Calu3 (cell line): ENCODE measurements at regions of chr18 and their contacts with region 1.

Region 1: GRCh38 chr18:44341759-44342158 is 338.9 kb upstream of the SETBP1 start:
- DNase-seq: peak; percentile 70
- H3K4me3 Mint-ChIP-seq: no peak overlapping the region
- H3K27ac Mint-ChIP-seq: peak overlapping the region; percentile 69
- H3K4me1 Mint-ChIP-seq: peaks cover 29% of the 10 kb centered on the region
- H3K27me3 Mint-ChIP-seq: no peaks in the 10 kb centered on the region
- CTCF ChIP-seq: no peak

Region 2: DNA sequence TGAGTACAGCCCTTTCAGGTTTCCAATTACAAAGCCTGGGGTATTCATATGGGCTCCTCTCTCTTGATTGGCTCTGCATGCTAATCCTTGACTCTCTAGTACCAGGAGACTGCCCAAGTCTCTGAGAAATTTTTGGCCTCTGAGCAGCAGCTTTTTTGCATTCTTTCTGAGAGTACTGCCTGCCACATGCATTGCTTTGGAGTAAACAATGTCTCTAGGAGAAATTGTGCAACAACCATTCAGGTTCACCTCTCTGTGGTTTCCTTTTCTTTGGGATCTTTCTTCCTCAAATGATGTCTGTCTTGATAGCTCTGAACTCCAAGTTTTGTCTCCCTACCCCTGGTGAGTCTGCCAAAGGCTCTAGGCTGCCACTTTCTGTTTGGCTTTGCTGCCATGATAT is 223.2 kb after region 1 on chr18:
- CTCF ChIA-PET with region 1: no interaction called
- intact Hi-C with region 1: loop called (anchors 10 kb)
- DNase-seq: no peak
- H3K4me3 Mint-ChIP-seq: no peak overlapping the region
- H3K27ac Mint-ChIP-seq: no peak overlapping the region
- H3K4me1 Mint-ChIP-seq: no peaks in the 10 kb centered on the region
- H3K27me3 Mint-ChIP-seq: no peaks in the 10 kb centered on the region
- CTCF ChIP-seq: no peak